ENCODE measurements at regions of chr5 and their contacts with region 1.

Region 1: DNA sequence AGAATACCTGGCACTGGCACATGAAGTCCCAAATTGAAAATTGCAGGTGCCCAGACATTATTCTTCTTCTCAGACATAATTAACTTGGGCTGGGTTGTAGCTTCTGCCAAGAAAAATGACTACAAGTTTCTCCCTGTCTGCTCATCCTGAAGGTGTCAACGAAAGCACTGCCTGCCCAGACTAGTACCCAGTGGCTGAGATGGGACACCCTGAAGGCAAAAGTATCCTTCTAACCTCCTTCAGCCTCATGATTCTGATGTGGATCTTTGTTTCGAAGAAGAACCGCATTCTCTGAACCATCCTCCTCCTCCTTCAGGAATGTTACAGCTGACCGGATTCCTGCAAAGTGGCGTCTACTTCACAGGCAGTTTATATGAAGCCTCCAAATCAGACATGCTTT is 161.1 kb upstream of the FST start:
- DNase-seq: no peak
- ATAC-seq: no peak
- H3K4me3 ChIP-seq: no peak overlapping the region
- H3K4me3 Mint-ChIP-seq: no peak overlapping the region
- H3K27ac ChIP-seq: no peak overlapping the region
- H3K27ac Mint-ChIP-seq: no peak overlapping the region
- H3K4me1 ChIP-seq: no peaks in the 10 kb centered on the region
- H3K4me1 Mint-ChIP-seq: no peaks in the 10 kb centered on the region
- H3K27me3 ChIP-seq: no peaks in the 10 kb centered on the region
- H3K27me3 Mint-ChIP-seq: peaks cover 3 to 5% of the 10 kb centered on the region in 2 donors

Region 2: DNA sequence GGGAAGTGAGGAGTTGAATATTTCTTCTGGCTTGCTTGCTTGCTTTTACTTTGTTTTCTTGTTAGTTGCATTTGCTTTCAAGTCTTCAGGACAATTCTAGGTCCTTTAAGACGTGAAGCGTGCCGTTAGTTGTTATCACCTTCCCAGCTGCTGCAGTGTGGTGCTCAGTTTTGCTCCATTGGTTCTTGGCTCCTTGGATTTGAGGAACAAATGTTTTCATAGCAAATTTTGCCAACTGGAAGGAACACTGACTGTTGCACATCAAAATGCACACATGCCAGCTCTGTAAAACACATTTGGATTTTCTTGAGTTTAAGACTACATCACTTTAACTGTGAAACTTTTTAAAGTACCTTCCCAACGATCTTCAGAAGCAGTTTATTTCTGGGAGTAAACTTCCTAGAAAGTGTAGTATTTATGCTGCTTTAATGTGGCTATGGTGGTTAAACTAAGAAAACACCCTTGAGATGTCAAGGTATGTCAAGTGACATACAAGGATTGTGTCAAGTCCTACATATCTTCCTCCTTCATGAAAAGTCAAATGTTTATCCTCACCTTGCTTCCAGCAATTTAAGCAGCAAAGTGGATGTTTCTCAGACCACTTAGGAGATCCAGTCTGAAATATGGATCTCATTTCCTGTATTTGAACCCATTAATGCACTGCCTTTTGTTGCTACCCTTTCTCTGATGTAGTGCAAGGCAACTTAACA is 234.6 kb before region 1 on chr5:
- CTCF ChIA-PET with region 1: no interaction called
- POLR2A ChIA-PET with region 1: no interaction called
- DNase-seq: no peak
- ATAC-seq: peak in 1 of 4 experiments; percentile 31
- H3K4me3 ChIP-seq: no peak overlapping the region
- H3K4me3 Mint-ChIP-seq: no peak overlapping the region
- H3K27ac ChIP-seq: no peak overlapping the region
- H3K27ac Mint-ChIP-seq: no peak overlapping the region
- H3K4me1 ChIP-seq: peaks cover 0 to 26% of the 10 kb centered on the region in 2 experiments
- H3K4me1 Mint-ChIP-seq: peaks cover 27 to 49% (median 44%) of the 10 kb centered on the region in 3 donors
- H3K27me3 ChIP-seq: no peaks in the 10 kb centered on the region
- H3K27me3 Mint-ChIP-seq: peaks cover 0 to 3% of the 10 kb centered on the region in 2 donors

Region 3: GRCh38 chr5:54040804-54041203 is 721.5 kb after region 1 on chr5:
- CTCF ChIA-PET with region 1: no interaction called
- POLR2A ChIA-PET with region 1: interaction called in 1 of 2 experiments, 11 read pairs
- DNase-seq: no peak
- ATAC-seq: no peak
- H3K4me3 ChIP-seq: no peak overlapping the region
- H3K4me3 Mint-ChIP-seq: no peak overlapping the region
- H3K27ac ChIP-seq: no peak overlapping the region
- H3K27ac Mint-ChIP-seq: no peak overlapping the region
- H3K4me1 ChIP-seq: no peaks in the 10 kb centered on the region
- H3K4me1 Mint-ChIP-seq: no peaks in the 10 kb centered on the region
- H3K27me3 ChIP-seq: no peaks in the 10 kb centered on the region
- H3K27me3 Mint-ChIP-seq: no peaks in the 10 kb centered on the region

Measured in T-cell (primary cell).